ENCODE measurements at regions of chr14 and their contacts with region 1.

Region 1: DNA sequence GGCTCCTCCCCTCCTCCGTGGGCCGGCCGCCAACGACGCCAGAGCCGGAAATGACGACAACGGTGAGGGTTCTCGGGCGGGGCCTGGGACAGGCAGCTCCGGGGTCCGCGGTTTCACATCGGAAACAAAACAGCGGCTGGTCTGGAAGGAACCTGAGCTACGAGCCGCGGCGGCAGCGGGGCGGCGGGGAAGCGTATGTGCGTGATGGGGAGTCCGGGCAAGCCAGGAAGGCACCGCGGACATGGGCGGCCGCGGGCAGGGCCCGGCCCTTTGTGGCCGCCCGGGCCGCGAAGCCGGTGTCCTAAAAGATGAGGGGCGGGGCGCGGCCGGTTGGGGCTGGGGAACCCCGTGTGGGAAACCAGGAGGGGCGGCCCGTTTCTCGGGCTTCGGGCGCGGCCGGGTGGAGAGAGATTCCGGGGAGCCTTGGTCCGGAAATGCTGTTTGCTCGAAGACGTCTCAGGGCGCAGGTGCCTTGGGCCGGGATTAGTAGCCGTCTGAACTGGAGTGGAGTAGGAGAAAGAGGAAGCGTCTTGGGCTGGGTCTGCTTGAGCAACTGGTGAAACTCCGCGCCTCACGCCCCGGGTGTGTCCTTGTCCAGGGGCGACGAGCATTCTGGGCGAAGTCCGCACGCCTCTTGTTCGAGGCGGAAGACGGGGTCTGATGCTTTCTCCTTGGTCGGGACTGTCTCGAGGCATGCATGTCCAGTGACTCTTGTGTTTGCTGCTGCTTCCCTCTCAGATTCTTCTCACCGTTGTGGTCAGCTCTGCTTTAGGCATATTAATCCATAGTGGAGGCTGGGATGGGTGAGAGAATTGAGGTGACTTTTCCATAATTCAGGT is at the start of gene PSEN1:
- DNase-seq: peak; percentile 96
- ATAC-seq: peak; percentile 81
- H3K4me3 ChIP-seq: peak within 1 kb of the TSS; percentile 75
- H3K27ac ChIP-seq: peak within 1 kb of the TSS; percentile 71
- H3K4me1 ChIP-seq: peaks cover 13% of the 10 kb centered on the region
- H3K27me3 ChIP-seq: no peaks in the 10 kb centered on the region
- CTCF ChIP-seq: no peak
- total RNA-seq, gene PSEN1: 41.4 and 43.0 TPM in 2 replicates

Region 2: DNA sequence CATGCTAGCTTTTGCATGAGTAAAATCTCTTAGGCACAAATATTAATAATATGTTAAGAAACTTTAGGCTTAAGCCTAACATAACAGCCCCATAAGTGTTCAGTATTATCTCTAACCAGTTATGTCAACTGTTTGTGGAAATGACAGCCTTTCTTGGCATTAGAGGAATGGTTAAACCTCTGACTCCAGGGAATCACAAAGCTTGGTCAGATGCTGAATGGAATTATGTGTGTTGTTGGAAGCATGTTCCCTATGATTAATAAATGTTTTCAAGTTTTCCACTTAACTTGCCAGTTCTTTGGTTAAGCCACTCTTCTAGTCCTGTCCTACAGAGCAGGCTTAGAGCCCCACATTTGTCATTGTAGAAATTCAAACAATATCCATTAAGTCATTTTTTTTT is 16.7 kb after region 1 on chr14:
- CTCF ChIA-PET with region 1: no interaction called
- POLR2A ChIA-PET with region 1: no interaction called
- intact Hi-C with region 1: loop called (anchors 1 kb)
- DNase-seq: no peak
- ATAC-seq: no peak
- H3K4me3 ChIP-seq: no peak overlapping the region
- H3K27ac ChIP-seq: no peak overlapping the region
- H3K4me1 ChIP-seq: no peaks in the 10 kb centered on the region
- H3K27me3 ChIP-seq: no peaks in the 10 kb centered on the region
- CTCF ChIP-seq: no peak

Region 3: DNA sequence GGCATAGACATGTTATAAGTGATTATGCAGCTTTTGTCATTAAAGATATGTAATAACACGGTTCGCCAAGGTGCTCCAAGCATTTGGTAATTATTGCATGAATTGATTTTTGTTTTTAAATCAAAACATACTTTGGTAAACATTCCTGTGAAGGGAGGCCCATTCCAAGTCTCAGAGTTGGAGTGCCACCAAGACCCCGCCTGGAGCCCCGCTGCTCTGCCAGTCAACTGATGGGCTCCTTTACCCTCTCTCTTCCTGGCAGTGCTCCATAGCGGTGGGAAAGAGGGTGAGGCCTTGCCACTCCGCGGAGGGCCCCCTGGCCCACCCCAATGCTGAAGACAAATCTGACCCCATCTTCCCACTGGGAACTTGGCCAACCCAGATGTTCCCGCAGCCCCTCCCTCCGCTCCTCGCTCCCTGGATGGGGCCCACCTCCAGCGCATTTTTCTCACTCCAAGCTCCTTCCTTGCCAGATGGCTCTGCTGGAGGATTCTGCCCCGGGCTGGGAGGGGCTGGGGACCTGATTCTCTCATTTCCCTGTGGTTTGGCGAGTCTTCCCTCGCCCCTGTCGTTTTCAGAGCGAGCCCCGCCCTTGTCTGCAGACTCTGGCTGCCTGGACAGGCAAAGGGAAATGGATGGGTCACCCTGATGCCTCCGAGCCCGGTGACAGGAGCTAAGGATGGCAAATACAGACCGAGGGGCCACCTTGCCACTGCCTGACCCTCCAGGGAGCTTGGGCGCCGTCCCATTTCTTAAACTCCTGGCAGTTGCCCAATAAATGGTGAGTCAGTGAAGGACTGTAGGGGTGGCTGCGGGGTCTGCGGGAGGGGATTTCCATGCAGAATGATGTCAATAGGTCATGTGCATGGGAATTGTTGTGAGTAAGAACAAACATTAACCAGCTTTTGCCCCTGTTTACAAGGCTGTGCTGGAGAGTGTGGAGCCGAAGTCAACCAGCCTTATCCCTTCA is 91.5 kb after region 1 on chr14:
- CTCF ChIA-PET with region 1: no interaction called
- POLR2A ChIA-PET with region 1: interaction called, 11 read pairs
- intact Hi-C with region 1: no loop called
- DNase-seq: peak; percentile 97
- ATAC-seq: peak; percentile 88
- H3K4me3 ChIP-seq: peak overlapping the region; percentile 40; the same call in 1 of the 2 replicates
- H3K27ac ChIP-seq: peak overlapping the region; percentile 88
- H3K4me1 ChIP-seq: peaks cover 23% of the 10 kb centered on the region
- H3K27me3 ChIP-seq: no peaks in the 10 kb centered on the region
- CTCF ChIP-seq: no peak

Region 4: GRCh38 chr14:74207947-74208346 is 1071.3 kb after region 1 on chr14:
- CTCF ChIA-PET with region 1: interaction called, 12 read pairs
- POLR2A ChIA-PET with region 1: no interaction called
- intact Hi-C with region 1: no loop called
- DNase-seq: peak; percentile 38
- ATAC-seq: no peak
- H3K4me3 ChIP-seq: no peak overlapping the region
- H3K27ac ChIP-seq: no peak overlapping the region
- H3K4me1 ChIP-seq: no peaks in the 10 kb centered on the region
- H3K27me3 ChIP-seq: no peaks in the 10 kb centered on the region
- CTCF ChIP-seq: peak; percentile 64

Measured in PC-3 (cell line).